Psoas muscle (tissue), 8 donors: ENCODE measurements at regions of chr22 and their contacts with region 1.

Region 1: DNA sequence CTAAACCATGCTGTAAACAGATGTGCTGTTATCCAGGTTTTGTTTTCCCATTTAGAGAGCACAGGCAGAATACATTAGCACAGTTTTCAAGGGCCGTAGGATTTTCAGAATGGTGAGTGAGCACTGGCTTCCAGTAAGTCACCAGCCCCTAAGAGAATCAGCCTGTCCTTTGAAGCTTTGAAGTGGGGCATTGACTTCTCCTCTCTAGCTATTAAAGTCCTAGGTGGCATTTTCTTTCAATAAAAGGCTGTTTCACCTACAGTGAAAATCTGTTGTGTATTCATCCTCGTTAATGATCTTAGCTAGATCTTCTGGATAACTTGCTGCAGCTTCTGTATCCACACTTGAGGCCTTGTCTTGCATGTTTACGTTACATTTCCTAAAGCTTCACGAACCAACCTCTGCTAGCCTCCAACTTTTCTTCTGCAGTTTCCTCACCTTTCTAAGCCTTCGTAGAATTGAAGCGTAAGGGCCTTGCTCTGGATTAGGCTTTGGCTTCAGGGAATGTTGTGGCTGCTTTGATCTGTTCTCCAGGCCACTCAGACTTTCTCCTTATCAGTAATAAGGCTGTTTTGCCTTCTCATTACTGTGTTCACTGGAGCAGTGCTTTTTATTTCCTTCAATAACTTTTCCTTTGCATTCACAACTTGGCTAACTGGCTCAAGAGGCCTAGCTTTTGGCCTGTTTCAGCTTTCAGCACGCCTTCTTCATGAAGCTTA is 15.5 kb downstream of the CECR2 start:
- DNase-seq: no peak
- ATAC-seq: no peak
- H3K4me3 ChIP-seq: no peak overlapping the region
- H3K27ac ChIP-seq: peak overlapping the region; percentile 25
- H3K4me1 ChIP-seq: peaks cover 37% of the 10 kb centered on the region
- H3K27me3 ChIP-seq: no peaks in the 10 kb centered on the region
- CTCF ChIP-seq: no peak

Region 2: DNA sequence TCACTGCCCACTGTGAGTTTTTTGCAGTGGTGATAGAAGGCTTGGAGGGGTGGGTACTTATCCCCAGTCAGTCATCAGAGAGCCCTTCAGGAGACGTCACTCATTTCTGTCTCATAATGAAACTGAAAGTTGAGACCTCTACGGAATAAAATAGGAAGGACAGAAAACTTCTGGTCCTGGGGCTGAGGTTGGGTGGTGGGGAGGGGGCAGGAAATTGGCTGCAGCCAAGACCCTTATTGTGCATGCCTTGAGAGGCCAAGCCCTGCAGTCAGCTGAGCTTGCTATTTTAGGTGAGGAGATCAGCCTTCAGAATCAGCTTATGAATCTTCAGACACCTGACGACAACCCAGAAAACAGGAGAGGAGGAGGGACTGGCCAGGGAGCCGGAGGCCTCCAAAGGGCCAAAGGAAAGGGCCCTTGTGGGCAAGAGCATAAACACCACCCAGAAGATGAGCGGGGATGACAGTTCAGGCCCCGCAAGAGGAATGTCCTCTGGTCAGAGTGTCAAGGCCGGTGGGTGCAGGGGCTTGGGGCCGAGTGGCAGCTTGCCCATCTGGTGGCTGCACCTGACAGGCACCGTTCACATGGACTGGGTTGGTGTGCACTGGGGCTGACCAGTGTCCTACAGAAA is 147.6 kb before region 1 on chr22:
- intact Hi-C with region 1: no loop called
- DNase-seq: no peak
- ATAC-seq: no peak
- H3K4me3 ChIP-seq: no peak overlapping the region
- H3K27ac ChIP-seq: no peak overlapping the region
- H3K4me1 ChIP-seq: no peaks in the 10 kb centered on the region
- H3K27me3 ChIP-seq: no peaks in the 10 kb centered on the region
- CTCF ChIP-seq: no peak

Region 3: GRCh38 chr22:17400305-17400704 is 15.5 kb after region 1 on chr22:
- intact Hi-C with region 1: loop called in 1 of 2 experiments (anchors 2 kb)
- DNase-seq: no peak
- ATAC-seq: peak in 3 of 4 donors; percentile 31 to 61 (median 48)
- H3K4me3 ChIP-seq: no peak overlapping the region
- H3K27ac ChIP-seq: peak overlapping the region; percentile 79
- H3K4me1 ChIP-seq: peaks cover 58% of the 10 kb centered on the region
- H3K27me3 ChIP-seq: no peaks in the 10 kb centered on the region
- CTCF ChIP-seq: no peak